K562 (cell line): ENCODE measurements at regions of chr6 and their contacts with region 1.

Region 1: DNA sequence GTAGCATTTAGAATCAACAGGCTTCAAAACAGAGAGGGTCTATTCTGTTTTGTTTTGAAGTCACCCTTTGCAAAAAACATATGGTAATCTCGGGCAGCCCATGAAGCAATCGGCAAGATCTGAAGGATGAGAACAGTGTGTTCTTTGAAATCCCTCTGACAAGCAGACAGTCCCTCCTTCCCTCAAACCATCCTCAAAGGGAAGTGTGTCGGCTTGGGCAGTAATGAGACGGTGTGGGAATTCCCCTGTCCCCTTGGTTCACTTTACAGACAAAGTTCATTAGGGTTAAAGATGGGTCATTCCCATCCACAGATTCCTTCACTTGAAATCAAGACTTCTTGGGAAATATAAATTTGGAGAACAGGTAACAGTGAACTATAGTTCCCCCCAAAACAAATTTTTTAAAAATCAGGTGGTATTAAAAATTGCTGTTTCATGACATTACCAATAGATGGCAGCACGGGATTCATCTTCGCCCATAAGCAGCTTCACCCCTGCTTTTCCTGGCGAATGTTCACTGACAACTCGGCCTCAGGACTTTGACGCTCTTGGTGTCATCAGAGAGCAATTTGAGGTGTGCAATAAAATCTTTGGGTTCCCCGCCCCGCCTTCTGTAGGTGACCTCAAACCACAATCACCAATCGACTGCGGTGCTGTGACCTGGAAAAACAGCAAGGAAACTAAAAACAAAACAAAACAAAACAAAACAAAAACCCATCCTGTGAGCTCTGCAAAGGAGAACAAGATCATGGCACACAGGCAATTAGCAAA is 159.3 kb upstream of the TNFAIP3 start:
- DNase-seq: peak; percentile 32 to 84 (median 60)
- ATAC-seq: peak; percentile 70
- H3K4me3 ChIP-seq: no peak overlapping the region
- H3K27ac ChIP-seq: no peak overlapping the region
- H3K4me1 ChIP-seq: peaks cover 0 to 10% of the 10 kb centered on the region in 2 experiments; a peak in 1 of 5 replicates
- H3K27me3 ChIP-seq: no peaks in the 10 kb centered on the region
- CTCF ChIP-seq: peak; percentile 83 to 98 (median 89)
- EP300 ChIP-seq: no peak
- POLR2A ChIP-seq: no peak
- RAD21 ChIP-seq: peak; percentile 98 to 99

Region 2: GRCh38 chr6:137799950-137800568 is 92.3 kb after region 1 on chr6:
- CTCF ChIA-PET with region 1: interaction called, 4 read pairs
- POLR2A ChIA-PET with region 1: no interaction called
- in situ Hi-C with region 1: loop called (anchors 5 kb)
- intact Hi-C with region 1: loop called (anchors 1 kb)
- DNase-seq: peak; percentile 51 to 88 (median 60)
- ATAC-seq: peak; percentile 92
- H3K4me3 ChIP-seq: no peak overlapping the region
- H3K27ac ChIP-seq: no peak overlapping the region
- H3K4me1 ChIP-seq: peaks cover 0 to 6% of the 10 kb centered on the region in 2 experiments; a peak in 4 of 5 replicates
- H3K27me3 ChIP-seq: no peaks in the 10 kb centered on the region
- CTCF ChIP-seq: peak; percentile 79 to 93 (median 85)
- EP300 ChIP-seq: 0 out of 2 replicates have a peak, but pooled peaks have one; percentile 18
- POLR2A ChIP-seq: no peak
- RAD21 ChIP-seq: peak; percentile 97 to 98

Region 3: GRCh38 chr6:137967689-137968454 is 260.1 kb after region 1 on chr6:
- CTCF ChIA-PET with region 1: no interaction called
- POLR2A ChIA-PET with region 1: no interaction called
- in situ Hi-C with region 1: loop called (anchors 10 kb)
- intact Hi-C with region 1: no loop called
- DNase-seq: no peak
- ATAC-seq: peak; percentile 12; the same call in 2 of the 3 replicates
- H3K4me3 ChIP-seq: no peak overlapping the region
- H3K27ac ChIP-seq: no peak overlapping the region
- H3K4me1 ChIP-seq: peaks cover 7 to 28% of the 10 kb centered on the region in 2 experiments; a peak in 3 of 5 replicates
- H3K27me3 ChIP-seq: no peaks in the 10 kb centered on the region
- CTCF ChIP-seq: no peak
- EP300 ChIP-seq: no peak
- POLR2A ChIP-seq: no peak
- RAD21 ChIP-seq: no peak

Region 4: DNA sequence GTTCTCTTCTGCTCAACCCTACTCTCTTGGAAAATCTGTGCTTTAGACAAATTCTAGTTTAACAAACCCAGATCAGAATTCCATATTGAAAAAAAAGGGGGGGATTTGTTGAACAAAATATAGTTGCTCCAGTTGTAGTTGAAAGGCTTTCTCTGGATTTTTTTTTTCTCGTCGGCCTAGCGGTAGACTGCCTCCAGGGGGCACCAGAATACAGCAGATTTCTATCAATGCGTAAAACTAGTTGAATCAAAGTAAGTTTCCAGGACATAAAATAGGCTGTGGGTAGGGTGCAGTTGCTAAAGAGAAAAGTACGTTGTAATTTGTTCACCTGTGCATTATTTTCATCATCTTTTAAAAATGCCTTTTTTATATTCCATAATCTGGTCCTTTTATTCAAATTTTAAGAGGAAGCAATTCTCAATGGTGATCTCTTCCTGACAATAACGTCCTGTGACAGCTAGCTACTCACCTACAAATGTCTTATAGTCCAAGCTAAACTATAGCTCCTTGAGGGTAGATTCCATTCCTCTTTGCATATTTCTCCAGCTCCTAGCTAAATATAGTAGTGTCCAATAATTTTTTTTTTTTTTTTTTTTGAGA is 294.1 kb after region 1 on chr6:
- CTCF ChIA-PET with region 1: interaction called, 87 read pairs
- POLR2A ChIA-PET with region 1: interaction called, 4 read pairs
- in situ Hi-C with region 1: loop called (anchors 5 kb)
- intact Hi-C with region 1: loop called (anchors 1 kb)
- DNase-seq: peak; percentile 48 to 74 (median 58)
- ATAC-seq: peak; percentile 60
- H3K4me3 ChIP-seq: no peak overlapping the region
- H3K27ac ChIP-seq: no peak overlapping the region
- H3K4me1 ChIP-seq: no peaks in the 10 kb centered on the region
- H3K27me3 ChIP-seq: peaks cover 4 to 7% of the 10 kb centered on the region in 2 experiments; a peak in 2 of 5 replicates
- CTCF ChIP-seq: peak; percentile 82 to 94 (median 86)
- EP300 ChIP-seq: no peak
- POLR2A ChIP-seq: no peak
- RAD21 ChIP-seq: peak; percentile 77 to 84

Region 5: DNA sequence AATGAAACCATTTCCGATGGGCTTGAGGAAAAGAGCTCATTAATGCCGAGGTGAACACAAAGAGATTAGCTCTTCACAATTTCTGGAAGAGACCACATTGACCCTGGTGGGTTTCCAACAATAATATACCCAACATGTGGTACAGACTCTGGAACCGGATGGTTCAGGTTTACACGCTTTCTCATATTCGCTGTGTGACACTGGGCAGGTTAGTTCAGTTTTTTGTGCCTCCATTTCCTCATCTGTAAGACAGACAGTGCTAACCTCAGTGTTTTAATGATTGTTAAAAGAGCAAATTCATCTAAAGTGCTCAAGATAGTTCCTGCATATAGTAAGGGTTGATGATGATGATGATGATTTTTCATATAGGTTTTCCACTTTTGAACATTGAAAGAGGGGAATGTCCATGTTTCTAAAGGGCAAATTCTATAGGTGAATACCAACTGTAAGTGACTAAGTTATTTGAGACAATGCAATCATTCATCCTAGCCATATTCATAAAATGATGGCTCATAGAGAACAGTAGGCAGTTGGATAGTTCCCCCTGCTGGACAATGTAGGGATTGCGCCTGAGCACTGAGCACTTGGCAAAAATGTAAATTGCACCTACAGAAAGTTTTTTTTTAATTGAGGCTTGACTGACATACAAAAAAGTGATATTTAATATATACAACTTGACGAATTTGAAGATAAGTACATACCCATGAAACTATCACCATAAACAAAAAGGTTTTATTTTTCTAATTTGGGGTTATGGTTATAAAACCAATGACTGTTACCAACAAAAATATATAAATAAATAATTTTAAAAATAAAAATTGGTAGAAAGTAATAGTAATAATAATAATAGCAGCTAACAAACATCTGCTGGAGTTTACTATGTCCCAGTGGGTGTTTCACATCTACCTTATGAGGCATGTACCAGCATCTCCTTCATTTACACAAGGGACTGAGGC is 401.5 kb after region 1 on chr6:
- CTCF ChIA-PET with region 1: interaction called, 15 read pairs
- POLR2A ChIA-PET with region 1: no interaction called
- in situ Hi-C with region 1: no loop called
- intact Hi-C with region 1: loop called (anchors 1 kb)
- DNase-seq: peak; percentile 61 to 78 (median 64)
- ATAC-seq: peak; percentile 44; the same call in 2 of the 3 replicates
- H3K4me3 ChIP-seq: no peak overlapping the region
- H3K27ac ChIP-seq: no peak overlapping the region
- H3K4me1 ChIP-seq: peaks cover 0 to 12% of the 10 kb centered on the region in 2 experiments; a peak in 2 of 5 replicates
- H3K27me3 ChIP-seq: peaks cover 34 to 39% of the 10 kb centered on the region in 2 experiments
- CTCF ChIP-seq: peak; percentile 77 to 97 (median 93)
- EP300 ChIP-seq: no peak
- POLR2A ChIP-seq: no peak
- RAD21 ChIP-seq: peak; percentile 88 to 91